ENCODE measurements at regions of chr1 and their contacts with region 1.

Region 1: GRCh38 chr1:207797229-207797961 is 45.5 kb downstream of the CD46 start:
- DNase-seq: peak; percentile 76
- ATAC-seq: peak; percentile 84
- H3K4me3 ChIP-seq: no peak overlapping the region
- H3K27ac ChIP-seq: no peak overlapping the region
- H3K4me1 ChIP-seq: no peaks in the 10 kb centered on the region
- H3K27me3 ChIP-seq: no peaks in the 10 kb centered on the region
- CTCF ChIP-seq: peak; percentile 75
- EP300 ChIP-seq: no peak
- POLR2A ChIP-seq: no peak
- RAD21 ChIP-seq: no peak; the same call in 1 of the 2 replicates

Region 2: GRCh38 chr1:207259391-207259790 is 538.0 kb before region 1 on chr1:
- CTCF ChIA-PET with region 1: no interaction called
- POLR2A ChIA-PET with region 1: no interaction called
- in situ Hi-C with region 1: no loop called
- intact Hi-C with region 1: no loop called
- DNase-seq: peak; percentile 23
- ATAC-seq: peak; percentile 72
- H3K4me3 ChIP-seq: no peak overlapping the region
- H3K27ac ChIP-seq: no peak overlapping the region
- H3K4me1 ChIP-seq: no peaks in the 10 kb centered on the region
- H3K27me3 ChIP-seq: no peaks in the 10 kb centered on the region
- CTCF ChIP-seq: peak; percentile 53
- EP300 ChIP-seq: no peak
- POLR2A ChIP-seq: no peak
- RAD21 ChIP-seq: 0 out of 2 replicates have a peak, but pooled peaks have one; percentile 29

Region 3: DNA sequence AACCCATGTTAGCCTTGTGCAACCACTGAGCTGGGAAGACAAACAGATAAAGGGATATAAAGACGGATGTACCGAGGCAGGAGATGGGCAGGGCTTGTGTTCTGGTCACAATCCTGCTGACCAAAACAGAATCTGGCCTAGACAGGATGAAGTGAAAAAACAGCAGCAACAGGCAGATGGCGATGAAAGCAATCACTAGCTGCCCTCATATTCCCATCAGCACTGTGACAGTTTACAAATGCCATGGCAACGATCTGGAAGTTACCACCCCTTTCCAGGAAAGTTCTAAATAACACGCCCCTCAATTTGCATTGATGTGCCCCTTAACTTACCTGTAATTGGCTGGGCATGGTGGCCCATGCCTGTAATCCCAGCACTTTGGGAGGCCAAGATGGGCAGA is 86.1 kb before region 1 on chr1:
- CTCF ChIA-PET with region 1: no interaction called
- POLR2A ChIA-PET with region 1: no interaction called
- in situ Hi-C with region 1: no loop called
- intact Hi-C with region 1: loop called (anchors 1 kb)
- DNase-seq: peak; percentile 20
- ATAC-seq: peak; percentile 71
- H3K4me3 ChIP-seq: no peak overlapping the region
- H3K27ac ChIP-seq: no peak overlapping the region
- H3K4me1 ChIP-seq: no peaks in the 10 kb centered on the region
- H3K27me3 ChIP-seq: no peaks in the 10 kb centered on the region
- CTCF ChIP-seq: peak; percentile 28; the same call in 1 of the 2 replicates
- EP300 ChIP-seq: no peak
- POLR2A ChIP-seq: no peak
- RAD21 ChIP-seq: no peak

Region 4: DNA sequence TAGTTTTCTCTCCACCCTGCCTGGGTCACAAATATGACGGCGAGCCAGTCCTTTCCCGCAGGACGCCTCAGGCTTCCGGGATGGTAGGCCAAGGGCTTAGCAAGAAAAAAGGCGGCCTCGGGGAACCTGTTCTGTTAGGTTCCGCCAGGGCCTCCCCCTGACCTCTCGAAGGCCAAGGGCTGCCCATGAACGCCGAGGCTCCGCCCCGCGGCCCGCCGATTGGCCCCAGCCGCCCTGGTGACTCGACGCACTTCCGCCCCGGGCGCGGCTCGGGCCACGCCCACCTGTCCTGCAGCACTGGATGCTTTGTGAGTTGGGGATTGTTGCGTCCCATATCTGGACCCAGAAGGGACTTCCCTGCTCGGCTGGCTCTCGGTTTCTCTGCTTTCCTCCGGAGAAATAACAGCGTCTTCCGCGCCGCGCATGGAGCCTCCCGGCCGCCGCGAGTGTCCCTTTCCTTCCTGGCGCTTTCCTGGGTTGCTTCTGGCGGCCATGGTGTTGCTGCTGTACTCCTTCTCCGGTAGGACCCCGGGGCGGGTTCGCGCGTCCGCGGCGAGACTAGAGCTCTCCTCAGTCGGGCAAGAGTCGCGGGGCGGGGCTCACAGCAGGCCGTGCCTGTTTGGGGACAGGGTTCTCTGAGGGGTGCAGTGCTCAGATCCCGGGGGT is 45.5 kb before region 1 on chr1 and contains the start of gene CD46:
- CTCF ChIA-PET with region 1: no interaction called
- POLR2A ChIA-PET with region 1: interaction called, 4 read pairs
- in situ Hi-C with region 1: no loop called
- intact Hi-C with region 1: loop called (anchors 1 kb)
- DNase-seq: peak; percentile 93
- ATAC-seq: peak; percentile 94
- H3K4me3 ChIP-seq: peak within 1 kb of the TSS; percentile 88 to 98 (median 98)
- H3K27ac ChIP-seq: peak within 1 kb of the TSS; percentile 97
- H3K4me1 ChIP-seq: peaks cover 67% of the 10 kb centered on the region
- H3K27me3 ChIP-seq: no peaks in the 10 kb centered on the region; a peak in 1 of 5 replicates
- CTCF ChIP-seq: no peak
- EP300 ChIP-seq: no peak; a peak in 1 of 4 replicates
- POLR2A ChIP-seq: peak; percentile 90 to 94
- RAD21 ChIP-seq: no peak
- total RNA-seq, gene CD46: 70.3 and 130 TPM in 2 replicates

Region 5: GRCh38 chr1:207925210-207925609 is 127.8 kb after region 1 on chr1:
- CTCF ChIA-PET with region 1: no interaction called
- POLR2A ChIA-PET with region 1: no interaction called
- in situ Hi-C with region 1: no loop called
- intact Hi-C with region 1: no loop called
- DNase-seq: no peak
- ATAC-seq: no peak
- H3K4me3 ChIP-seq: no peak overlapping the region
- H3K27ac ChIP-seq: no peak overlapping the region
- H3K4me1 ChIP-seq: no peaks in the 10 kb centered on the region
- H3K27me3 ChIP-seq: peaks cover 1 to 31% of the 10 kb centered on the region in 2 experiments; a peak in 2 of 5 replicates
- CTCF ChIP-seq: no peak
- EP300 ChIP-seq: no peak
- POLR2A ChIP-seq: no peak
- RAD21 ChIP-seq: no peak

Measured in HepG2 (cell line).